ENCODE measurements at regions of chr3 and their contacts with region 1.

Region 1: GRCh38 chr3:47899495-47900125 is 96.7 kb downstream of the DHX30 start:
- DNase-seq: no peak
- H3K4me3 Mint-ChIP-seq: no peak overlapping the region
- H3K27ac Mint-ChIP-seq: no peak overlapping the region
- H3K4me1 Mint-ChIP-seq: peaks cover 8% of the 10 kb centered on the region
- H3K27me3 Mint-ChIP-seq: no peaks in the 10 kb centered on the region

Region 2: DNA sequence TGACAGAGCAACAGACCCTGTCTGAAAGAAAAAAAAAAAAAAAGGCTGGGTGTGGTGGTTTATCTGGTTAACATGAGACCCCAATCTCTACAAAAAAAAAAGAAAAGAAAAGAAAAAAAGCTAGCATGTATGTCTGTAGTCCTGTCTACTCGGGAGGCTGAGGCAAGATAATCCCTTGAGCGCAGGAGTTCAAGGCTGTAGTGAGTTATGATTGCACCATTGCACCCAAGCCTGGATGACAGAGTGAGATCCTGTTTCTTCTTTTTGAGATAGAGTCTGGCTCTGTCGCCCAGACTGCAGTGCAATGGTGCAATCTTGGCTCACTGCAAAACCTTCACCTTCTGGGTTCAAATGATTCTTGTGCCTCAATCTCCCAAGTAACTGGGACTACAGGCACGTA is 105.1 kb before region 1 on chr3:
- CTCF ChIA-PET with region 1: interaction called, 4 read pairs
- POLR2A ChIA-PET with region 1: interaction called, 18 read pairs
- DNase-seq: no peak
- H3K4me3 Mint-ChIP-seq: no peak overlapping the region
- H3K27ac Mint-ChIP-seq: no peak overlapping the region
- H3K4me1 Mint-ChIP-seq: no peaks in the 10 kb centered on the region
- H3K27me3 Mint-ChIP-seq: no peaks in the 10 kb centered on the region

Region 3: GRCh38 chr3:47877290-47877689 is 22.3 kb before region 1 on chr3:
- CTCF ChIA-PET with region 1: no interaction called
- POLR2A ChIA-PET with region 1: no interaction called
- DNase-seq: no peak
- H3K4me3 Mint-ChIP-seq: no peak overlapping the region
- H3K27ac Mint-ChIP-seq: no peak overlapping the region
- H3K4me1 Mint-ChIP-seq: peaks cover 10% of the 10 kb centered on the region
- H3K27me3 Mint-ChIP-seq: no peaks in the 10 kb centered on the region